GM10248 (cell line): ENCODE measurements at regions of chr12 and their contacts with region 1.

Region 1: DNA sequence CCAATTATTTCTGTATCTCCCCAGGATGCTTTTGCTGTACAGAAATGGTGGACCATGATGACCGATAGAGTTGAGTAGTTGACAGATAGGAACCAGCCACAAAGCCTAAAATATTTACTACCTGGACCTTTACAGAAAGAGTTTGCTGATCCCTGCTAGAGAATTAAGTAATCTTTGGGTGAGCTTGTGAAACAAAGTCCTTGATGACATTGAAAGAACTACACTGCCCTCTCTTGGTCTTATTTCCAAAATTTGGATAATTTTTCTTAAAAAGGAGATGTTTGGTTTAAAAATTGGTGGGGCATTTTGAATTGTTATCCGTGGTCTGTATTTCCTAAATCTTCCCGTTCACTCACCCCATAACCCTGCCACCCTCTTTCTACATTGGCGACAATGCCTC is 13.7 kb upstream of the TCTN1 start:
- DNase-seq: peak; percentile 44
- CTCF ChIP-seq: peak; percentile 15

Region 2: GRCh38 chr12:110449799-110450497 is 150.3 kb before region 1 on chr12 and contains the start of gene ARPC3:
- CTCF ChIA-PET with region 1: interaction called, 141 read pairs
- POLR2A ChIA-PET with region 1: no interaction called
- DNase-seq: peak; percentile 93
- CTCF ChIP-seq: peak; percentile 99

Region 3: GRCh38 chr12:110508071-110508586 is 92.1 kb before region 1 on chr12:
- CTCF ChIA-PET with region 1: interaction called, 176 read pairs
- POLR2A ChIA-PET with region 1: no interaction called
- DNase-seq: no peak
- CTCF ChIP-seq: no peak

Region 4: GRCh38 chr12:110556705-110557104 is 43.5 kb before region 1 on chr12:
- CTCF ChIA-PET with region 1: interaction called, 61 read pairs
- POLR2A ChIA-PET with region 1: no interaction called
- DNase-seq: no peak
- CTCF ChIP-seq: no peak

Region 5: DNA sequence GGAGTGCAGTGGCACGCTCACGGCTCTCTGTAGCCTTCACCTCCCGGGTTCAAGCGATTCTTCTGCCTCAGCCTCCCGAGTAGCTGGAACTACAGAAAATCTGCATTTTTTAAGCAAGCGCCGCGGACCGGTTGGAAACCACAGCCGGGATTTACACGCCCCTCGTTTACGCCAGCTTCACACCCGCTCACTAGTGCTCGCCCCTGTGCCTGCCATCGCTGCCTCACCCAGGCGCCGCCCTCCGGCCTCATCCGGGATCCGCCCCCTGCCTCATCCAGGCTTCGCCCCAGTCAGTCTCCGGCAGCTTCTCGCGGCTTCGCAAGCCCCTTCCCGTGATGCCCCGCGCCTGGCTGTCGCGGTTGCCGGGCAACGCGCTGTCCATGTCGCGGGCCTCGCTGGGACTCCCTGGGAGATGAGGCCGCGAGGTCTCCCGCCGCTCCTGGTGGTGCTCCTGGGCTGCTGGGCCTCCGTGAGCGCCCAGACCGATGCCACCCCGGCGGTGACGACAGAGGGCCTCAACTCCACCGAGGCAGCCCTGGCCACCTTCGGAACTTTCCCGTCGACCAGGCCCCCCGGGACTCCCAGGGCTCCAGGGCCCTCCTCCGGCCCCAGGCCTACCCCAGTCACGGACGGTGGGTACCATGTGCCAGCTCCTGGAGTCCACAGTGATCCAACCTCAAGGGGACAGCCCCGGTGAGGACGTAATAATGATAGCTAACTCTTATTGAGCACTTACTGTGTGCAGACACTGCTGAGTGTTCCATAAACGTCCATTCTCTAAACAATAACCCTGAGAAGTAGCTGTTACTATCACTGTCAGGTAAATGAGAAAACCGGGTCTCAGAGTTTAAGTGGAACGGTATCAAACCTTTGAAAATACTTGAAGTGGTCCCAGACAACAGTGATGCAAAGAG is 13.8 kb after region 1 on chr12 and contains the start of gene TCTN1:
- CTCF ChIA-PET with region 1: interaction called, 32 read pairs
- POLR2A ChIA-PET with region 1: no interaction called
- DNase-seq: peak; percentile 97
- CTCF ChIP-seq: no peak

Region 6: DNA sequence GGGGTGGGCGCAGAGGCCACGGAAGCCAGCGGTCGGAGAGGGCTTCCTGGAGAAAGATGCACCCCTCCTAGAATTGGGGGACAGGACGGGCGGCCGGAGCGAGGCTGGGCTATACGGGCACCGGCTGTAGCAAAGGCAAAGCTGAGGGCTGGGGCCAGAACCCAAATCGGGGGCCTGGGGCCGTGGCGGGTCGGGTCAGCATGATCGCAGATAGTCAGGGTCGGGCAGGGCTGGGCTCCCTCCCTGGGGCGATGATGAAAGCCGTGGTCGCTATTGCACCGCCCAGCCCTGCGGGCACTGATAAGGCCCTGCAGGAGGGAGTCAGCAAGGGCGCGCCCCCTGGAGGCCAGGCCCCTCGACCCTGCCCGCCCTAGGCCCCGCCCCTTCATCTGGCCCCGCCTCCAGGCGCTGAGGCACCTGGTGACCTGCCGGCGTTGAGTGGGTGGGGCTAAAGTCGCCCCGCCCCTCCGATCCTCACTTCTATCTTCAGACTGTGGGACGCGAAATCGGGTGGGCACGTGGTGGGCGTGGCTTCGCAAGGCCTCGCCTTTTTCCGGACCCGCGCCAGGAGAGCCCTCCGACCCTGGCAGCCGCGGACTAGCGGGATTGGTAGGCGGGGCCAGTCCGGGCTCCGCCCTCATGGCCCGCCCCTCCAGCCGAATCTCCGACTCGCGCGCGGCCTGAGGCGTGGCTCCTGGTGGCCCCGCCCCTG is 805.1 kb after region 1 on chr12:
- CTCF ChIA-PET with region 1: no interaction called
- POLR2A ChIA-PET with region 1: no interaction called
- DNase-seq: peak; percentile 98
- CTCF ChIP-seq: peak; percentile 61

Region 7: DNA sequence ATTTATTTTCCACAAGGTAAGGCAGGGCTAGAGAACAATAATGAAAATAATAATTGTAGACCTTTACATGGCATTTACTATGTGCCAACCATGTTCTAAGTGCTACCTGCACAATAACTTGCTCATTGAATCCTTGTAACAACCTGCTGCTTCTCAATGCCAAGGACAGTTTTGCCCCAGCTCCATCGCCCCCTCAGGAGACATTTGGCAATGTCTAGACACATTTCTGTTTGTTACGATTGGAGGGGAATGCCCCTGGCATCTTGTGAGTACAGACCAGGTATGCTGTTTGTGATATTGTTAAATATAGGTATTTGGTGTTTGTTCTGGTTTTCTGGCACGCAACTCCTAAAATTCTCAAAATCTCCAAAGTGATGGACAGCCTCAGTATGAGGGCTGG is 1007.0 kb after region 1 on chr12:
- CTCF ChIA-PET with region 1: no interaction called
- POLR2A ChIA-PET with region 1: no interaction called
- DNase-seq: no peak
- CTCF ChIP-seq: no peak